ENCODE measurements at regions of chr14 and their contacts with region 1.

Region 1: GRCh38 chr14:106681568-106681967 is 1155.2 kb downstream of the TMEM121 start:
- H3K4me3 ChIP-seq: no peak overlapping the region
- H3K27ac ChIP-seq: no peak overlapping the region
- H3K4me1 ChIP-seq: no peaks in the 10 kb centered on the region
- CTCF ChIP-seq: no peak

Region 2: DNA sequence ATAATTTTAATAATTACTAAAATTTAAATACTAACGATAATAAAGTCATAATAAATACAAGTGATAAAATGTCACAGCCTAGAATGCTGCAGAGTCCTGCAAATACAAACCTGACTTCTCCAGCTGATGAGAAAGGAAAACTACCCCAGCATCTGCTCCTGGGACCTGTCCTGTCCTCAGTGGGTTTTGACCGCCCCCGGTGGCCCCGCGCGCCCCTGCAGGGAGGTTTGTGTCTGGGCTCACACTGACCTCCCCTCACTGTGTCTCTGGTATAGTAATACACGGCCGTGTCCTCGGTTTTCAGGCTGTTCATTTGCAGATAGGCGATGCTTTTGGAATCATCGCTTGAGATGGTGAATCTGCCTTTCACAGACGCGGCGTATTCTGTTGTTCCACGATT is 15.8 kb before region 1 on chr14:
- CTCF ChIA-PET with region 1: interaction called, 24 read pairs
- POLR2A ChIA-PET with region 1: no interaction called
- H3K4me3 ChIP-seq: no peak overlapping the region
- H3K27ac ChIP-seq: no peak overlapping the region
- H3K4me1 ChIP-seq: no peaks in the 10 kb centered on the region
- CTCF ChIP-seq: no peak